Left lung (tissue), 14 donors: ENCODE measurements at regions of chr18 and their contacts with region 1.

Region 1: GRCh38 chr18:955379-956066 is 50.9 kb downstream of the ADCYAP1 start:
- DNase-seq: no peak
- ATAC-seq: no peak
- H3K4me3 ChIP-seq: no peak overlapping the region
- H3K27ac ChIP-seq: no peak overlapping the region
- H3K4me1 ChIP-seq: no peaks in the 10 kb centered on the region
- H3K27me3 ChIP-seq: peaks cover 0 to 6% of the 10 kb centered on the region in 2 donors
- CTCF ChIP-seq: no peak

Region 2: GRCh38 chr18:864872-865273 is 90.7 kb before region 1 on chr18:
- intact Hi-C with region 1: loop called in 1 of 2 experiments (anchors 5 kb)
- DNase-seq: peak; percentile 47 to 84 (median 64)
- ATAC-seq: peak; percentile 98
- H3K4me3 ChIP-seq: no peak overlapping the region
- H3K27ac ChIP-seq: no peak overlapping the region
- H3K4me1 ChIP-seq: peaks cover 0 to 6% of the 10 kb centered on the region in 2 donors
- H3K27me3 ChIP-seq: peaks cover 0 to 27% of the 10 kb centered on the region in 2 donors
- CTCF ChIP-seq: peak; percentile 75 to 96